Activated B cell treated with CpG ODN at 0.5 μM for 24 hours (primary cell): ENCODE measurements at regions of chr3 and their contacts with region 1.

Region 1: GRCh38 chr3:122021811-122022401 is at the start of gene ILDR1:
- DNase-seq: peak; percentile 72
- ATAC-seq: peak; percentile 89
- H3K4me3 Mint-ChIP-seq: peak within 1 kb of the TSS; percentile 77
- H3K27ac Mint-ChIP-seq: peak within 1 kb of the TSS; percentile 50
- H3K4me1 Mint-ChIP-seq: peaks cover 52% of the 10 kb centered on the region
- H3K27me3 Mint-ChIP-seq: no peaks in the 10 kb centered on the region
- CTCF ChIP-seq: no peak
- total RNA-seq, gene ILDR1: 1.3 and 1.4 TPM in 2 replicates

Region 2: GRCh38 chr3:121467085-121467484 is 554.8 kb before region 1 on chr3:
- CTCF ChIA-PET with region 1: no interaction called
- POLR2A ChIA-PET with region 1: no interaction called
- intact Hi-C with region 1: no loop called
- DNase-seq: no peak
- ATAC-seq: no peak
- H3K4me3 Mint-ChIP-seq: no peak overlapping the region
- H3K27ac Mint-ChIP-seq: no peak overlapping the region
- H3K4me1 Mint-ChIP-seq: no peaks in the 10 kb centered on the region
- H3K27me3 Mint-ChIP-seq: no peaks in the 10 kb centered on the region
- CTCF ChIP-seq: no peak

Region 3: DNA sequence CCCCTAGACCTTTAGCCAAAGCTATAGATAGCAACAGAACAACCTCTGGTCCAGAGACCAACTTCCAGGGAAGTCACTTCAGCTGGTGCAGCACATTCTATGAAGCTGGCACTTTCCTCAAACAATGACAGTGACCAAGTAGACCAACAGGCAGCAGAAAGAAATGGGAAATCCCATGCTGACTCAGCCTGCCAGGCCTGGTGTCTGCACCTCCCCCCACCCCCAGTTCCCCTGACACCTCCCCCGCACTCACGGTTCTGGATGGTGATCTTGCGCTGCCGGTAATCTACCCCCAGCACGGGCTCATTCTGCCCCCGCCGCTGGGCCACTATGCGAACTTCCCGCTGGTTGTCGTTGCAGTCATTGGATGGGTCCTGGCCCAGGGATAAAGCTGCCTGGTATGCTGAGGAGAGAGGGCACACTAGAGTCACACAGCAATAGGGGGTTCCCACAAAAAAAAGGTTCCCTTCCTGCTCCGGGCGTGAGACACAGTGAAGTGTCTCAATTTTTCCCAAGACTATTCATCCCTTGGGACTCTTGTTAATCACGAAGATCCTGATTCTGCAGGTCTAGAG is 16.8 kb before region 1 on chr3:
- CTCF ChIA-PET with region 1: no interaction called
- POLR2A ChIA-PET with region 1: interaction called, 3 read pairs
- intact Hi-C with region 1: loop called (anchors 1 kb)
- DNase-seq: peak; percentile 49
- ATAC-seq: peak; percentile 76
- H3K4me3 Mint-ChIP-seq: peak overlapping the region; percentile 76
- H3K27ac Mint-ChIP-seq: peak overlapping the region; percentile 91
- H3K4me1 Mint-ChIP-seq: peaks cover 65% of the 10 kb centered on the region
- H3K27me3 Mint-ChIP-seq: no peaks in the 10 kb centered on the region
- CTCF ChIP-seq: no peak

Region 4: DNA sequence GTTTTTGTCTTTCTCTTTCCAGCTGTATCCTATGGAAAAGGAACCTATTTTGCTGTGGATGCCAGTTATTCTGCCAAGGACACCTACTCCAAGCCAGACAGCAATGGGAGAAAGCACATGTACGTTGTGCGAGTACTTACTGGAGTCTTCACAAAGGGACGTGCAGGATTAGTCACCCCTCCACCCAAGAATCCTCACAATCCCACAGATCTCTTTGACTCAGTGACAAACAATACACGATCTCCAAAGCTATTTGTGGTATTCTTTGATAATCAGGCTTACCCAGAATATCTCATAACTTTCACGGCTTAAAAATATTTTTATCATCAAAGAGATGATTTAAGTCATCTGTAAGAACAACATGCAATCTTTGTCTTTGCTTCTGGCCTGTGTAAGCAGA is 613.9 kb after region 1 on chr3:
- CTCF ChIA-PET with region 1: no interaction called
- POLR2A ChIA-PET with region 1: no interaction called
- intact Hi-C with region 1: no loop called
- DNase-seq: no peak
- ATAC-seq: no peak
- H3K4me3 Mint-ChIP-seq: no peak overlapping the region
- H3K27ac Mint-ChIP-seq: no peak overlapping the region
- H3K4me1 Mint-ChIP-seq: peaks cover 11% of the 10 kb centered on the region
- H3K27me3 Mint-ChIP-seq: no peaks in the 10 kb centered on the region
- CTCF ChIP-seq: no peak